ENCODE measurements at regions of chr5 and their contacts with region 1.

Region 1: DNA sequence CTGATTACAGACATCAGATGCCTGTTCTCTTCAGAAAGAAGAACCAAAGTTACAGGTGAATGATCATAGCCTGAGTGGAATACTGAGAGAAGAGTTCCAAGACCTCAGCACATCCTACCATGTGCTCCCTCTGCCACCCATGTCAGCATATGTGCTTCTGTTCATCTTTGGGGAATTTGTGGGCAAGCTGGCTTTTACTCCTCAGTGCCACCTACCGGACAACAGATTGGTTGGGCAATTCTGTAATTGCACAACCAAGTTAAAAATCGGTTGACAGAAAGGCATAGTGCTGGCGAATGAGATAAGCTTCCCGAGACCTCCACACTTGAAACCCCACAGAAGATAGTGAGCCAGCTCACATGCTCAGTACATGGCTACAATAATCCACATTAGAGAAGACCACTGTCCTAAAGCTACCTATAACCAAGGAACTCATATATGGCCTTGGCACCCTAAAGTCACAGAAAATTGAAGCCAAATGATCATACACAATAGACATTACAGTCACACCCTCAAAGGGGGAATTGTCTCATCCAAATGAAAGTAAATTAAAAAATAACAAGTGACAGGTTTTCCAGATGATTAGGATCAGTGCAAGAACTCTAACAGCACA is 1238.0 kb upstream of the NUDT12 start:
- DNase-seq: peak in 1 of 2 experiments; percentile 2
- H3K4me3 ChIP-seq: no peak overlapping the region
- H3K27ac ChIP-seq: no peak overlapping the region
- H3K4me1 ChIP-seq: no peaks in the 10 kb centered on the region
- H3K27me3 ChIP-seq: no peaks in the 10 kb centered on the region
- CTCF ChIP-seq: peak; percentile 22 to 69 (median 60)
- EP300 ChIP-seq: no peak
- POLR2A ChIP-seq: no peak
- RAD21 ChIP-seq: peak; percentile 57 to 73

Region 2: DNA sequence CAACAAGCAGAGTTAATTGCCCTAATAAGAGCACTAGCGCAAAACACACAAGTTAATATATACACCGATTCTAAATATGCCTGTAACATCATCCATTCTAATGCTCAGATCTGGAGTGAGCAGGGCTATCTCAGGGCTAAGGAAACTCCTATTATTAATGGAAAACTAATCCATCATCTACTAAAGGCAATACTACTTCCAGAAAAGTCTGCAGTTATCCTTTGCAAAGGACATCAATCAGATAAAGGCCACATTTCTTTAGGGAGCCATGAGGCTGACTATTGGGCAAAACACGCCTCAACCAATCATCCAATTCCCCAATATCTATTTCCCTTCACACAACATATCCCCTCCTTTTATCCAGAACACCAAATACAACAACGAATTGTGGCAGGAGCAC is 205.7 kb before region 1 on chr5:
- CTCF ChIA-PET with region 1: no interaction called
- POLR2A ChIA-PET with region 1: no interaction called
- DNase-seq: no peak
- H3K4me3 ChIP-seq: no peak overlapping the region
- H3K27ac ChIP-seq: no peak overlapping the region
- H3K4me1 ChIP-seq: no peaks in the 10 kb centered on the region
- H3K27me3 ChIP-seq: no peaks in the 10 kb centered on the region
- CTCF ChIP-seq: no peak
- EP300 ChIP-seq: no peak
- POLR2A ChIP-seq: no peak
- RAD21 ChIP-seq: no peak

Region 3: DNA sequence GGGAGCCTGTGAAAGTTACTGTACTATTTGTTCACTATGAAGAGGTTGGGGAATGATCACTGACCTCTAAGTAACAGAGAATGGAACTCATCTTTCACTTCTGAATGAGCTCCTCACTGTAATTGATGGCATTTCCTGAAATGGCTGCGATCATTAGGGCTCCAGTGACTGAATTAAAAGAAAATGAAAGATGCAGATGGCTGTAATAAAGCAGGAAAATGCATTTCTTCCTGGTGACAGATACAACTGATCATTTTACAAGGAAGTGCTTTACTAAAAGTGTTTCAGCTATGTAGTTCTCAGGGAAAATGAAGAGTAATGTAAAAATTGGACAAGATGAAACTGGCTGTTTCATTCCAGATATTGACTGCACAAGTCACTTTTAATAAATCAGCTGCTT is 37.3 kb before region 1 on chr5:
- CTCF ChIA-PET with region 1: no interaction called
- POLR2A ChIA-PET with region 1: no interaction called
- DNase-seq: no peak
- H3K4me3 ChIP-seq: no peak overlapping the region
- H3K27ac ChIP-seq: no peak overlapping the region
- H3K4me1 ChIP-seq: no peaks in the 10 kb centered on the region
- H3K27me3 ChIP-seq: no peaks in the 10 kb centered on the region
- CTCF ChIP-seq: no peak
- EP300 ChIP-seq: no peak
- POLR2A ChIP-seq: no peak
- RAD21 ChIP-seq: no peak

Region 4: GRCh38 chr5:104815212-104815611 is 14.7 kb after region 1 on chr5:
- CTCF ChIA-PET with region 1: interaction called, 10 read pairs
- POLR2A ChIA-PET with region 1: no interaction called
- DNase-seq: no peak
- H3K4me3 ChIP-seq: no peak overlapping the region
- H3K27ac ChIP-seq: no peak overlapping the region
- H3K4me1 ChIP-seq: no peaks in the 10 kb centered on the region
- H3K27me3 ChIP-seq: no peaks in the 10 kb centered on the region
- CTCF ChIP-seq: no peak
- EP300 ChIP-seq: no peak
- POLR2A ChIP-seq: no peak
- RAD21 ChIP-seq: no peak